MCF 10A (cell line): ENCODE measurements at regions of chr15 and their contacts with region 1.

Region 1: GRCh38 chr15:80058851-80059785 is at the start of gene ZFAND6:
- DNase-seq: peak; percentile 95
- H3K4me3 Mint-ChIP-seq: peak within 1 kb of the TSS; percentile 87
- H3K27ac Mint-ChIP-seq: peak within 1 kb of the TSS; percentile 84
- H3K4me1 Mint-ChIP-seq: peaks cover 16% of the 10 kb centered on the region
- H3K27me3 Mint-ChIP-seq: no peaks in the 10 kb centered on the region
- CTCF ChIP-seq: no peak
- total RNA-seq, gene ZFAND6: 57.6 and 59.5 TPM in 2 replicates

Region 2: GRCh38 chr15:79896637-79897379 is 162.3 kb before region 1 on chr15 and contains the start of gene MTHFS:
- CTCF ChIA-PET with region 1: interaction called, 3 read pairs
- POLR2A ChIA-PET with region 1: interaction called, 32 read pairs
- intact Hi-C with region 1: loop called (anchors 5 kb)
- DNase-seq: peak; percentile 75
- H3K4me3 Mint-ChIP-seq: peak within 1 kb of the TSS; percentile 84
- H3K27ac Mint-ChIP-seq: peak within 1 kb of the TSS; percentile 85
- H3K4me1 Mint-ChIP-seq: peaks cover 38% of the 10 kb centered on the region
- H3K27me3 Mint-ChIP-seq: no peaks in the 10 kb centered on the region
- CTCF ChIP-seq: peak; percentile 45
- total RNA-seq, gene MTHFS: 28.5 and 34.5 TPM in 2 replicates

Region 3: GRCh38 chr15:80031841-80032240 is 27.3 kb before region 1 on chr15:
- CTCF ChIA-PET with region 1: no interaction called
- POLR2A ChIA-PET with region 1: interaction called, 6 read pairs
- intact Hi-C with region 1: loop called (anchors 1 kb)
- DNase-seq: peak; percentile 26
- H3K4me3 Mint-ChIP-seq: no peak overlapping the region
- H3K27ac Mint-ChIP-seq: no peak overlapping the region
- H3K4me1 Mint-ChIP-seq: peaks cover 22% of the 10 kb centered on the region
- H3K27me3 Mint-ChIP-seq: no peaks in the 10 kb centered on the region
- CTCF ChIP-seq: no peak

Region 4: GRCh38 chr15:80087100-80087499 is 28.0 kb after region 1 on chr15:
- CTCF ChIA-PET with region 1: interaction called, 4 read pairs
- POLR2A ChIA-PET with region 1: interaction called, 17 read pairs
- intact Hi-C with region 1: no loop called
- DNase-seq: no peak
- H3K4me3 Mint-ChIP-seq: no peak overlapping the region
- H3K27ac Mint-ChIP-seq: no peak overlapping the region
- H3K4me1 Mint-ChIP-seq: peaks cover 11% of the 10 kb centered on the region
- H3K27me3 Mint-ChIP-seq: no peaks in the 10 kb centered on the region
- CTCF ChIP-seq: no peak

Region 5: GRCh38 chr15:80173022-80173759 is 114.1 kb after region 1 on chr15:
- CTCF ChIA-PET with region 1: interaction called, 13 read pairs
- POLR2A ChIA-PET with region 1: interaction called, 35 read pairs
- intact Hi-C with region 1: loop called (anchors 2 kb)
- DNase-seq: peak; percentile 97
- H3K4me3 Mint-ChIP-seq: no peak overlapping the region
- H3K27ac Mint-ChIP-seq: no peak overlapping the region
- H3K4me1 Mint-ChIP-seq: peaks cover 46% of the 10 kb centered on the region
- H3K27me3 Mint-ChIP-seq: no peaks in the 10 kb centered on the region
- CTCF ChIP-seq: peak; percentile 87

Region 6: GRCh38 chr15:80234883-80235282 is 175.8 kb after region 1 on chr15:
- CTCF ChIA-PET with region 1: no interaction called
- POLR2A ChIA-PET with region 1: no interaction called
- intact Hi-C with region 1: loop called (anchors 10 kb)
- DNase-seq: peak; percentile 57
- H3K4me3 Mint-ChIP-seq: no peak overlapping the region
- H3K27ac Mint-ChIP-seq: no peak overlapping the region
- H3K4me1 Mint-ChIP-seq: no peaks in the 10 kb centered on the region
- H3K27me3 Mint-ChIP-seq: no peaks in the 10 kb centered on the region
- CTCF ChIP-seq: peak; percentile 43